Heart right ventricle (tissue), 16 donors: ENCODE measurements at regions of chr10 and their contacts with region 1.

Region 1: DNA sequence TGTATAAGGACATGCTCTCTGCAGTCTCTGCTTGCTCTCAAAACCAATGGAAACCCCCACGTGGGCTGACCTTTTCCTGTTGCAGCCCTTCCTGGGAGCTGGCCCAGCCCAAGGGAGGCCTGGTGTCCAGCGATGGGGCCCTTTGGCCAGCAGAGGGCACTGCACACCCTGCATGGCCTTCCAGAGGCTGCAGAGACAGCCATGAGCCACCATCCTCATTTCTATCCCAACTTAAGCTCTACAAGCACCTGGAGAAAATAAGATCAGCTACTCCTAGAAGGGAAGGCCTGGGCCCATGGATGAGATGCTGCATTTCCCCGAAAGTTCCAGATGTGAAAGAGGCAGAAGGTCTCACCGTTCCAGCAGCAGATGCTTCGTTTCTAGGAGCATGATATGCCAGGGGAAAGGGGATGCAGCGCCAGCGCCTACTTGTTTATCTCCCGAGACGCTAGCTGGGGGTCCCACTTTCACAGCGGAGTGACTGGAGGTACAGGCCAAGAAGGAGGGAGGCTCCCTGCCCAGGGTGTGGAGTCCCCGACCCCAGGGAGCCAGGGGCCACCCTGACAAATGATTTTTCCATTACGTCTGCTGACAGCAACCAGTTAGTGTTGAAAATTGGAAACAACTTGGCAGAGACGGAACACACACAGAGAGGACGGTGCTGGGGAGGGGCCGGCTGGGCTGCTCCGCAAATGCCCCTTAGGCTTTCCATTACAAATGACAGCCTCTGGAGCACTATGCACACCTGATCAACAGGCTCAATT is 106.4 kb downstream of the ZRANB1 start:
- DNase-seq: peak; percentile 86 to 89
- ATAC-seq: peak; percentile 87 to 96 (median 94)
- H3K4me3 ChIP-seq: no peak overlapping the region
- H3K27ac ChIP-seq: peak overlapping the region in 7 of 10 donors; percentile 8 to 62 (median 42)
- H3K4me1 ChIP-seq: peaks cover 22 to 98% (median 64%) of the 10 kb centered on the region in 9 donors
- H3K27me3 ChIP-seq: no peaks in the 10 kb centered on the region
- CTCF ChIP-seq: peak; percentile 92 to 99 (median 98)

Region 2: DNA sequence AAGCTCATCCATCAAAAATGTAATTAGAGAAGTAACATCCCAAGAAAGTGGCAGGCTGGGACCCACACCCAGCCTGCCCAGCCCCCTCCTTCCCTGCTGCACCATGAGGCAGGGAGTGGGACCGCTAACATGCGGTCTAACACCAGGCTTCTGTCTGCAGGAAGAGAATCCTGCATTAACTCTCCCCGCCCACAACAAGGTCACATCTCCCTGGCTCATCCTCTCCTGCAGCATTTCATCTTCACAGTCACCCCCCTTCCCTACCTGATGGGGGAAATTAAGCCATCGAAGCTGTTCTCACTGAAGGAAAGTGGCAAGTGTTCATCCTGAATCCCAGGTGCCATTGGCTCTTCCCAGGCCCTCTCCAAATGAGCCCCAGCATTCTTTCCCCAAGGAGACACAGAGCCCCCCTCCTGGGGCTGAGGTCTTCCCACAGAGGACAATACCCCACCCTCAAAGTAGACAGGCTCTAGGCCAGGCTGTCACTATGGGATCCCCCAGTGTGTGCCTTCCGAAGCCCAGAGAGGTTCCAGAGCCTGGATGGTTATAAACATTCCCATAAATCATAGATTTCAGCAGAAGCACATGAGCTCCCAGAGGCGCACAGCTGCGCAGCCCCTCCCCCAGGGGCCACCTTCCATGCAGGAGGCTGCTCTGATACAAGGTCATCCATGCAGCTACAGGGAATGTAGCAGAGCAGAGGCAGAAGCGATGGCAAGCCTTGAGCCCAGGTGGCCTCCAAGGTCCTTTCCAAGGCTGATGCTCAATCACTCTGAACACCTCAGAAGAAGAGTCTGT is 777.6 kb before region 1 on chr10:
- intact Hi-C with region 1: no loop called
- DNase-seq: no peak
- ATAC-seq: no peak
- H3K4me3 ChIP-seq: no peak overlapping the region
- H3K27ac ChIP-seq: no peak overlapping the region
- H3K4me1 ChIP-seq: peaks cover 0 to 15% (median 0%) of the 10 kb centered on the region in 9 donors
- H3K27me3 ChIP-seq: no peaks in the 10 kb centered on the region
- CTCF ChIP-seq: no peak

Region 3: GRCh38 chr10:125000366-125001312 is 47.6 kb before region 1 on chr10:
- intact Hi-C with region 1: loop called in 4 of 10 experiments (anchors 5 to 10 kb)
- DNase-seq: peak in 1 of 2 donors; percentile 18
- ATAC-seq: peak in 6 of 8 donors; percentile 23 to 60 (median 36)
- H3K4me3 ChIP-seq: no peak overlapping the region
- H3K27ac ChIP-seq: peak overlapping the region in 9 of 10 donors; percentile 12 to 81 (median 71)
- H3K4me1 ChIP-seq: peaks cover 30 to 56% (median 42%) of the 10 kb centered on the region in 9 donors
- H3K27me3 ChIP-seq: no peaks in the 10 kb centered on the region
- CTCF ChIP-seq: peak in 6 of 9 donors; percentile 5 to 45 (median 28)

Region 4: GRCh38 chr10:125137601-125138438 is 89.5 kb after region 1 on chr10:
- intact Hi-C with region 1: loop called in 1 of 10 experiments (anchors 5 kb)
- DNase-seq: no peak
- ATAC-seq: peak in 7 of 8 donors; percentile 15 to 57 (median 43)
- H3K4me3 ChIP-seq: no peak overlapping the region
- H3K27ac ChIP-seq: peak overlapping the region in 6 of 10 donors; percentile 2 to 65 (median 14)
- H3K4me1 ChIP-seq: peaks cover 24 to 81% (median 50%) of the 10 kb centered on the region in 9 donors
- H3K27me3 ChIP-seq: no peaks in the 10 kb centered on the region
- CTCF ChIP-seq: peak in 3 of 9 donors; percentile 8 to 35 (median 23)

Region 5: DNA sequence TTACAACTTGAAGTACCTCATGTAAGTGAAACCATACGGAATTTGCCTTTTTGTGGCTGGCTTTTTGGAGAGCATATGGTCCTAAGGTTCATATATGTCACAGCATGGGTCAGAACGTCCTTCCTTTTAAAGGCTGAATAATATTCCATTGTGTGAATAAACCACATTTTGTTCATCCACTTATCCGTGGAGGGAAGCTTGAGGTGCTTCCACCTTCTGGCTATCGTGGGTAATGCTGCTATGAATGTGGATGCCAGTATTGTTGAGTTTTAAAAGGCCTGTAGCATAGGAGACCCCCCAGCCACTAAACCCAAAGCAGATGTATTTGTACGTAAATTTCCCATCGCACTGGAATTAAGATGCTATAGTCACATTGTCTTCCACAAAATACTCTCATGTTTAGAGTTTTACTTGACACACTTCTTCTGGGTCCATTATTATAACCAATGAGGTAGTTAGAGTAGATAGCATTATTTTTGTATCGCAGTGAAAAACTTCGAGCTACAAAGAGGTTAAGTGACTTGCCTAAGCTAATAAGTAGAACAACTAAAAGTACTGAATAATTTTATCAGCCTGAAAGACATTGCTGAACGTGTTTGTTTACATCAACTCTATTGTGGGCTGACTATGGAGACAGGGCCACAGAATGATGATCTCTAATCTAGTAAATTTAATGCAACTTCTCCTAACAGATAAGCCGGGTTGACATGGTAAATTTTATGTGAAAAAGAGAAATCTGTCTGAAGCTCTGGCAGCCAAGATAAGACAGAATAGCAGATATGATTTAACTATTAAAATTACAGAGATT is 295.0 kb after region 1 on chr10:
- intact Hi-C with region 1: loop called in 8 of 10 experiments (anchors 5 to 10 kb)
- DNase-seq: no peak
- ATAC-seq: peak in 1 of 8 donors; percentile 25
- H3K4me3 ChIP-seq: no peak overlapping the region
- H3K27ac ChIP-seq: no peak overlapping the region
- H3K4me1 ChIP-seq: no peaks in the 10 kb centered on the region
- H3K27me3 ChIP-seq: peaks cover 0 to 8% (median 0%) of the 10 kb centered on the region in 7 donors
- CTCF ChIP-seq: peak; percentile 25 to 71 (median 61)